ENCODE measurements at regions of chr22 and their contacts with region 1.

Region 1: DNA sequence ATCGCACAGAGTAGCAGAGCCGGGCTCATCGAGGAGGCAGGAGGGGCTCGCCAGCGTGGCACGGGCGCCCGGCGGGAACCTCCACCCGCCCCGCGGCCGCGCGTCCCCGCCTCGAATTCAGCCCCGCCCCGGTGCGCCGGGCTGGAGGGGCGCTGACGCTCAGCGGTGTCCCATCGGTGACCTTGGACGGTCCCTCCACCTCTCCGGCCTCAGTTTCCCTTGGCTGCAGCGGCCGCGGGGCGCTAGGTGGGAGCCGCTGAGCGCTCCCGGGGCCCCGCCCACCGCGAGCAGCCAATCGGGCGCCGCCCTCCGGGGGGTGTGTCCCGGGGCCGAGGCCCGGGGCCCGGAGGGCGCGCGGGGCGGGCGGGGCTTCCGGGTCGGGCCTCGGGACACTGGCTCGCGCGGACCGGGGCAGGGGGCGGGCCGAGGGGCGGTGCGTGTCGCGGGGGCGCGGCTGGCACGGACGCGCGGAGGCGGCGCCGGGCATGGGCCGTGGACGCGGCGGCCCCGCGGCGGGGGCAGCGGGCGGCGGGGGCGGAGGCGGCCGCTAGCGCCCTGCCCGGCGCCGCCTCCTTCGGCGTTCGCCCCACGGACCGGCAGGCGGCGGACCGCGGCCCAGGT is at the start of gene PPARA:
- DNase-seq: peak; percentile 95
- ATAC-seq: peak; percentile 91
- total RNA-seq, gene PPARA: 66.1 TPM

Region 2: DNA sequence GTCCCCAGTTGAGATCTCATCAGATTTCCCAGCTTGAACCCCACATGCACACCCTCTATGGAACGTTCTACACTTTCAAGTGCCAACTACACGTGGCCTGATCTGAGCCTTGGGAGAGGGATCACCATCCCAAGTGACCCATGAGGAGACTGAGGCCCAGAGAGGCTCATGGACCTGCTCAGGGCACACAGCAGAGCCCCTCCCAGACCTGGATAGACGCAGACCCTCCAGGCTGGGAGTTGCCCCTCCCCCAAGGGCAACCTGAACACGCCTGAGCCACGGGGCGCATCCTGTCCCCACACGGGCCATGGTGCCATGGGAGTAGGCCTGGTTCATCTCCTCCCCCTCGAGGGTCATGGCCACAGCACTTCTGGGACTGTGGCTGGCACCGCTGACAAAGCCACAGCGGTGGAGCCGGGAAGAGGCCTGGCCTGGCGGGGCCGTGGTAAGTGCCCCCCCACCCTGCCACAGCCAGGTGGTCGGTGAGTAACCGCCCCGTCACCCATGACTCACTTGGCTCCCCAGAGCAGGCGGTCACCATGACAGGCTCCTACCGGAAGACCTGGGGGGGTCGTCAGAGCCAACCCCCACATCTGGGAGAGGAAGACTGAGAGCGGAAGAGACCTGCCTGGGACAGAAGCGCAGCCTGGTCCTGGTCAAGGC is 181.3 kb before region 1 on chr22:
- intact Hi-C with region 1: no loop called
- DNase-seq: no peak
- ATAC-seq: no peak

Region 3: DNA sequence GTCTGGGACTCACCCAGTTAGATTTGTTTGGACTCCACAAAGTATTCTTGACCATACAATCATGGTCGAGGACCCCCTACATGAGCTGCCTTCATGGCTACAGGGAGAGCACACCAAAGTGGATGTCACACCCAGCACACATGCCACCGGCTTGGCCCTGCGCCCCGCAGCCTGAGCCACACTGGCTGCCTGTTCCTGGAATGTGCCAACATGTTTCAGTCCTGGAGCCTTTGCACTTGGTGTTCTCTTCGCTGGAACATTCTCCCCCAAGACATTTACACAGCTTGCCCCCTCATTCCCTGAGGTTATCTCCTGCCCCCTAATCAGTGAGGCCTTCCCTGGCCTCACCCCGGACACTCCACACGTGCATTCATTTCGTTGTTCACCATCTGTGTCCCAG is 46.1 kb after region 1 on chr22:
- intact Hi-C with region 1: loop called (anchors 5 kb)
- DNase-seq: peak; percentile 86
- ATAC-seq: peak; percentile 94

Region 4: DNA sequence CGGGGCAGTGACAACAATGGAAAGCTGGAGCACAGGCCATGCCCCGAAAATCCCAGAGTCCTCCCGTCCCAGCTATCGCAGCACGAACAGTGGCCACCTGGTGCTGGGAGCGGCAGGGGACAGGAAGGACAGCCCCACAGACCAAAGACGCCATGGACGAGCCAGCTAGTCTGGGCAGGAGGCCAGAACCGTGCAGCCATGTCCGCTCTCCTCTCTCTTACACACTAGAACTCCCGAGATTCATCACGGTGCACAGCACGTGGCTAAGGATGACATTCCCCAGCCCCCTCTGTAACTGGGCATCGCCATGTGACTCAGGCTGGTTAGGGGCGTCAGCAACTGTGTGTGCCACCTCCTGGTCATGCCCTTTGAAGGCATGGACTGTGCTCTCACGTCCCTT is 95.4 kb after region 1 on chr22:
- intact Hi-C with region 1: loop called (anchors 5 kb)
- DNase-seq: peak; percentile 86
- ATAC-seq: peak; percentile 50

Region 5: GRCh38 chr22:46296257-46297150 is 146.4 kb after region 1 on chr22 and contains the start of gene GTSE1:
- intact Hi-C with region 1: loop called (anchors 5 kb)
- DNase-seq: peak; percentile 100
- ATAC-seq: peak; percentile 98
- total RNA-seq, gene GTSE1: 0.43 TPM